ENCODE measurements at regions of chr7 and their contacts with region 1.

Region 1: GRCh38 chr7:2471396-2471795 is 4.8 kb downstream of the GRIFIN start:
- DNase-seq: no peak
- H3K4me3 ChIP-seq: no peak overlapping the region
- H3K4me3 Mint-ChIP-seq: no peak overlapping the region
- H3K27ac Mint-ChIP-seq: no peak overlapping the region
- H3K4me1 ChIP-seq: no peaks in the 10 kb centered on the region; the same call in 1 of the 2 replicates
- H3K4me1 Mint-ChIP-seq: peaks cover 12% of the 10 kb centered on the region
- H3K27me3 ChIP-seq: no peaks in the 10 kb centered on the region
- H3K27me3 Mint-ChIP-seq: no peaks in the 10 kb centered on the region
- CTCF ChIP-seq: no peak

Region 2: DNA sequence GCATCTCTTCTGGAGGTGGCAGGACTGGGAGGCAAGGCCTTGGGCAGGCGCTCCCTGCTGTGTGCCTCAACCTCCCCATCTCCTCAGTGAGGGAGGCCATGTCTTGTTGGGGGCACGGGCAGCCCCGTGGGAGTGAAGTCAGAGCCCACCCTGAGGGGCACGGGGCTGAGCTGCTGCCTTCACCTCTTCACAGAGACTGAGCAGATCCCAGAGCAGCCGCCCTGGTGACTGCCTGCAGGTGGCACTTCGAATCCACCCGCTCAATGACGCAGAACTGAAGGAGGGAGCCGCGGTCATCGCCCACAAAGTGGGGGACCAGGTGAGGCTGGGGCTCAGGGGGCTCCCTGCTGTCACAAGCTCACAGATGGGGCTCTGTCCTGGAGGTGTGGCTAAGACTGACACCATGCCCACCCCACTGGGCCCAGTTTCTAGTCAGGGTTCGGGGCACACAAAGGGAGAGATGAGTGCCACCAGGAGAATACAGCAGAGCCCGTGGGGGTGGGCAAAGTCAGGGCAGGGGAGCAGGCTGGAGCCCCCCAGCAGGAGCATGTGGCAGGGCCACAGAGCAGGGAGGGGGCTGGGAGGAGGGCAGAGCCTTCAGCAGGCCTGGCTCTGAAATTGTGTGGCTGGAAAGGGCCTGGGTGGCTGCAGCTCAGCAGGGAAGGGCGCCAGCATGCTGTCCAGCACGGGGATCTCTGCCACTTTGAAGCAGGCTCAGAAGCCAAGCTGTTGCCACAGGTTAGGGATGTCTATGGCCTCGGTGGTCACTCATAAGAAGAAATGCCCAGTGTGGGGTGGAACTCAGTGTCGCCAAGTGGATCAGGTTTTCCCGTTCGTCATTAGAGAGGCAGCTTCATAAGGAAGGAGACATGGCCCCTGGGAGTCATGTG is 86.8 kb before region 1 on chr7:
- CTCF ChIA-PET with region 1: interaction called, 10 read pairs
- POLR2A ChIA-PET with region 1: interaction called, 3 read pairs
- intact Hi-C with region 1: no loop called
- DNase-seq: peak in 1 of 2 experiments; percentile 30
- H3K4me3 ChIP-seq: no peak overlapping the region
- H3K4me3 Mint-ChIP-seq: no peak overlapping the region
- H3K27ac Mint-ChIP-seq: peak overlapping the region; percentile 74
- H3K4me1 ChIP-seq: no peaks in the 10 kb centered on the region
- H3K4me1 Mint-ChIP-seq: peaks cover 7% of the 10 kb centered on the region
- H3K27me3 ChIP-seq: no peaks in the 10 kb centered on the region
- H3K27me3 Mint-ChIP-seq: no peaks in the 10 kb centered on the region
- CTCF ChIP-seq: no peak

Region 3: GRCh38 chr7:2411815-2412586 is 59.4 kb before region 1 on chr7:
- CTCF ChIA-PET with region 1: interaction called, 11 read pairs
- POLR2A ChIA-PET with region 1: no interaction called
- intact Hi-C with region 1: no loop called
- DNase-seq: peak; percentile 60 to 65
- H3K4me3 ChIP-seq: no peak overlapping the region
- H3K4me3 Mint-ChIP-seq: peak overlapping the region; percentile 43
- H3K27ac Mint-ChIP-seq: peak overlapping the region; percentile 83
- H3K4me1 ChIP-seq: peaks cover 30% of the 10 kb centered on the region
- H3K4me1 Mint-ChIP-seq: peaks cover 50% of the 10 kb centered on the region
- H3K27me3 ChIP-seq: no peaks in the 10 kb centered on the region
- H3K27me3 Mint-ChIP-seq: no peaks in the 10 kb centered on the region
- CTCF ChIP-seq: no peak

Region 4: GRCh38 chr7:2440608-2441245 is 30.7 kb before region 1 on chr7:
- CTCF ChIA-PET with region 1: interaction called, 11 read pairs
- POLR2A ChIA-PET with region 1: no interaction called
- intact Hi-C with region 1: no loop called
- DNase-seq: peak; percentile 92 to 93
- H3K4me3 ChIP-seq: no peak overlapping the region
- H3K4me3 Mint-ChIP-seq: peak overlapping the region; percentile 65
- H3K27ac Mint-ChIP-seq: peak overlapping the region; percentile 95
- H3K4me1 ChIP-seq: peaks cover 53% of the 10 kb centered on the region
- H3K4me1 Mint-ChIP-seq: peaks cover 50% of the 10 kb centered on the region
- H3K27me3 ChIP-seq: no peaks in the 10 kb centered on the region
- H3K27me3 Mint-ChIP-seq: no peaks in the 10 kb centered on the region
- CTCF ChIP-seq: no peak

Region 5: GRCh38 chr7:2451171-2452073 is 20.0 kb before region 1 on chr7:
- CTCF ChIA-PET with region 1: interaction called, 75 read pairs
- POLR2A ChIA-PET with region 1: interaction called, 7 read pairs
- intact Hi-C with region 1: loop called (anchors 1 kb)
- DNase-seq: peak; percentile 85 to 92
- H3K4me3 ChIP-seq: peak overlapping the region; percentile 26
- H3K4me3 Mint-ChIP-seq: peak overlapping the region; percentile 70
- H3K27ac Mint-ChIP-seq: peak overlapping the region; percentile 72
- H3K4me1 ChIP-seq: peaks cover 6% of the 10 kb centered on the region
- H3K4me1 Mint-ChIP-seq: no peaks in the 10 kb centered on the region
- H3K27me3 ChIP-seq: no peaks in the 10 kb centered on the region
- H3K27me3 Mint-ChIP-seq: no peaks in the 10 kb centered on the region
- CTCF ChIP-seq: peak; percentile 89 to 93

Region 6: DNA sequence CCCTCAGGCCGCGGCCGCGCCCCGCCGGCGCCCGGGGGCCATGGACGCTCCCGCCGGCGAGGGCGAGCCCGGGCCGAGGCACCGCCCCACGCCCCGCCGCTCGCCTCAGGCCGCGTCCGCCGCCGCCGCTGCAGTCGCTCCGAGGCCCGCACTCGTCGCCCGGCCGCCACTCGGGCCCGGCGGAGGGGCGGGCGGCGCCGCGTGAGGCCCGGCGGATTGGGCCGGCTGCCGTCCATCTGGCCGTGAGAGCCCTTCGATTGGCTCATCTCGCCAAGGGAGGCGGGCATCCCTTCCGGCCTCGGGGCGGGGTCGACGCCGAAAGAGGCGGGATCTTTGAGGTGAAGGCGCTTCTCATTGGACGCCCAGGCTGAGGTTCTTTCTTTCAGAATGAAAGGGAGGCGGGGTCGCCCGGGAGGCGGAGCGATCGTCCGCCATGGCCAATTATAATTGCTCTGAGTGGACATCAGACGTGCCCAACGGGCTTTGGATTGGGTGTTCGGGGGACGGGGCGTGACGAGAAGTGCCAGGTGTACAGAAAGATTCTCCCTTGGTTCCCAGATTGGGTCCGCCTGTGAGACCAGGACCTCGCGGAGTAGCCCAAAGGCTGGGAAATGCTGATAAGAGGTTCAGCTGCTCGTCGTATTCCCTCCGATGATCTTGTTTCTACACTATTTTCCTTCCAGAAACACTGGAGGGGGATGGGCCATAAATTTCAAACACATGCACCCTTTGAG is 372.9 kb after region 1 on chr7 and contains the start of gene GNA12:
- CTCF ChIA-PET with region 1: no interaction called
- POLR2A ChIA-PET with region 1: no interaction called
- intact Hi-C with region 1: no loop called
- DNase-seq: peak; percentile 99
- H3K4me3 ChIP-seq: peak within 1 kb of the TSS; percentile 94
- H3K4me3 Mint-ChIP-seq: peak within 1 kb of the TSS; percentile 77
- H3K27ac Mint-ChIP-seq: peak within 1 kb of the TSS; percentile 71
- H3K4me1 ChIP-seq: peaks cover 12% of the 10 kb centered on the region
- H3K4me1 Mint-ChIP-seq: peaks cover 6% of the 10 kb centered on the region
- H3K27me3 ChIP-seq: no peaks in the 10 kb centered on the region
- H3K27me3 Mint-ChIP-seq: no peaks in the 10 kb centered on the region
- CTCF ChIP-seq: no peak
- total RNA-seq, gene GNA12: 59.3 and 63.8 TPM in 2 replicates